Lower leg skin (tissue), 4 donors: ENCODE measurements at regions of chr15 and their contacts with region 1.

Region 1: GRCh38 chr15:99704444-99704838 is 28.8 kb downstream of the LYSMD4 start:
- DNase-seq: peak in 1 of 2 donors; percentile 74
- H3K4me3 ChIP-seq: no peak overlapping the region
- CTCF ChIP-seq: peak in 1 of 3 donors; percentile 77
- POLR2A ChIP-seq: no peak

Region 2: GRCh38 chr15:99282121-99282520 is 422.3 kb before region 1 on chr15:
- intact Hi-C with region 1: loop called (anchors 10 kb)
- DNase-seq: no peak
- H3K4me3 ChIP-seq: no peak overlapping the region
- CTCF ChIP-seq: no peak
- POLR2A ChIP-seq: no peak